CD8-positive, alpha-beta memory T cell (primary cell): ENCODE measurements at regions of chr20 and their contacts with region 1.

Region 1: DNA sequence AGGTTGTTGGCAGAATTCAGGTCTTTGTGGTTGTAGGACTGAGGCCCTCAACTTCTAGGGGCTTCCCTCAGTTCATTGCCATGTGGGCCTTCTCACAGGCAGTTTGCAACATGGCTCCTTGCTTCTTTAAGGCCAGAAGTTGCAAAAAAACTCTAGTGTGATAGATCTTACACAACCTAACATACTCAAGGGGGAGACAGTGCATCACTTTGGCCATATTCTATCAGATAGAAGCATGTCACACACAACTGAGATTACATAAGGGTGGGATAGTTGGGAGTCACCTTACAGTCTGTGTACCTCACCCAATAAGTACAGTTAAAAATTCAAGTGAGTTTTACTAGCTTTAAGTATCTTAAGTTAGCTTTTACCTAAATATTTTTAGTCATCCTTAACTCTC is 1.6 kb downstream of the SIRPD start:
- DNase-seq: peak in 2 of 5 donors; percentile 9 to 12
- H3K4me3 ChIP-seq: no peak overlapping the region
- H3K4me3 Mint-ChIP-seq: no peak overlapping the region
- H3K27ac ChIP-seq: no peak overlapping the region
- H3K27ac Mint-ChIP-seq: peak overlapping the region in 1 of 8 donors; percentile 38
- H3K4me1 ChIP-seq: no peaks in the 10 kb centered on the region
- H3K4me1 Mint-ChIP-seq: peaks cover 0 to 8% (median 7%) of the 10 kb centered on the region in 3 donors
- H3K27me3 ChIP-seq: no peaks in the 10 kb centered on the region
- H3K27me3 Mint-ChIP-seq: peaks cover 0 to under 1% of the 10 kb centered on the region in 2 donors

Region 2: GRCh38 chr20:1215386-1216170 is 340.4 kb before region 1 on chr20:
- CTCF ChIA-PET with region 1: no interaction called
- POLR2A ChIA-PET with region 1: no interaction called
- DNase-seq: peak in 1 of 5 donors; percentile 43
- H3K4me3 ChIP-seq: no peak overlapping the region
- H3K4me3 Mint-ChIP-seq: peak overlapping the region in 5 of 7 donors; percentile 2 to 59 (median 33)
- H3K27ac ChIP-seq: peak overlapping the region; percentile 4
- H3K27ac Mint-ChIP-seq: peak overlapping the region in 6 of 8 donors; percentile 27 to 91 (median 63)
- H3K4me1 ChIP-seq: peaks cover 34% of the 10 kb centered on the region
- H3K4me1 Mint-ChIP-seq: peaks cover 14 to 21% (median 17%) of the 10 kb centered on the region in 3 donors
- H3K27me3 ChIP-seq: no peaks in the 10 kb centered on the region
- H3K27me3 Mint-ChIP-seq: peaks cover 16 to 31% of the 10 kb centered on the region in 2 donors

Region 3: DNA sequence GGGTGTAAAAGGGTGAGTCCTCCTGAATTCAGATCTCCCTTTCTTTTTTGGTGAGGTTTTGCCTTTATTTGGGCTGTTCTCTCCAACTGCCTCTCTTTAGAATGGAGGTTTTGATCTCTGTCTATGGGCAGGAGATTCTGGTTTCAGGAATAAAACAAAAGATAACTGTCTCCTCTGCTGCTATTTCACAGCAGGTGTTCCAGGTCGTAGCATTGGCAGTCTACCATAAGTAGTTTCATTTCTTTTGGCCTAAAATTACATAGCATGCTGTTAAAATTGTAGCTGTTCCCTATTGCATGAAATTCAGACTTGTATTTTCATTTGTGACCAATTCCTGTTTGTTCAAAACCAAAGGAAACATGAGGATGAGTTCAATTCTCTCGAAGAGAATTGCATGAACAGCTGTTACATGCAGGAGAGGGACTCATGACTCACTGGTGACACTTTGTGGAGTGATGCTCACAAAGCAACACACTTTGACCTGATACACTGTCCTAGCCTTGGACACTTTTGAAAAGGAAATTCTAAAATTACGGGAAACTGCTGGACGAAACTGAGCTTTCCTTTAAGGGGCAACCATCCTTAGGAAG is 178.4 kb after region 1 on chr20:
- CTCF ChIA-PET with region 1: interaction called, 14 read pairs
- POLR2A ChIA-PET with region 1: no interaction called
- DNase-seq: peak in 3 of 5 donors; percentile 22 to 51 (median 33)
- H3K4me3 ChIP-seq: no peak overlapping the region
- H3K4me3 Mint-ChIP-seq: no peak overlapping the region
- H3K27ac ChIP-seq: no peak overlapping the region
- H3K27ac Mint-ChIP-seq: peak overlapping the region in 2 of 8 donors; percentile 21 to 36
- H3K4me1 ChIP-seq: peaks cover 24% of the 10 kb centered on the region
- H3K4me1 Mint-ChIP-seq: peaks cover 7 to 14% (median 7%) of the 10 kb centered on the region in 3 donors
- H3K27me3 ChIP-seq: no peaks in the 10 kb centered on the region
- H3K27me3 Mint-ChIP-seq: peaks cover 2 to 10% of the 10 kb centered on the region in 2 donors